ENCODE measurements at regions of chr1 and their contacts with region 1.

Region 1: GRCh38 chr1:8987881-8988617 is 38.2 kb downstream of the SLC2A7 start:
- DNase-seq: peak; percentile 19 to 78 (median 65)
- ATAC-seq: peak; percentile 89
- H3K4me3 ChIP-seq: no peak overlapping the region
- H3K4me3 Mint-ChIP-seq: peak overlapping the region; percentile 36 to 85 (median 73)
- H3K27ac ChIP-seq: peak overlapping the region; percentile 65
- H3K27ac Mint-ChIP-seq: peak overlapping the region; percentile 57 to 99 (median 93)
- H3K4me1 ChIP-seq: peaks cover 4 to 22% of the 10 kb centered on the region in 2 donors
- H3K4me1 Mint-ChIP-seq: peaks cover 9 to 63% (median 41%) of the 10 kb centered on the region in 7 donors
- H3K27me3 ChIP-seq: no peaks in the 10 kb centered on the region
- H3K27me3 Mint-ChIP-seq: no peaks in the 10 kb centered on the region

Region 2: DNA sequence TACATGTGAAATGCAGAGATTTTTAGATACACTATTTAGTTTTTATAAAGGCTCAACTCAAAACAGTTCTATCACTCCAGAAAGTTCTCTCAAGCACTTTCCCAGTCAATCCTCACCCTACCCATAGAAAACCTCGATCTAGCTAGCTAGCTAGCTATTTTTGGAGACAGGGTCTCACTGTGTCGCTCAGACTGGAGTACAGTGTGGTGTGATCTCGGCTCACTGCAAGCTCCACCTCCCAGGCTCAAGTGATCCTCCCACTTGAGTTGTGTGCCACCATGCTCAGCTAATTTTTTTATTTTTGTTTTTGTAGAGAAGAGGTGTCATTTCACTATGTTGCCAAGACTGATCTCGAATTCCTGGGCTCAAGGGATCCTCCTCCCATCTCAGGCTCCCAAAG is 407.5 kb before region 1 on chr1:
- CTCF ChIA-PET with region 1: no interaction called
- POLR2A ChIA-PET with region 1: no interaction called
- intact Hi-C with region 1: no loop called
- DNase-seq: no peak
- ATAC-seq: no peak
- H3K4me3 ChIP-seq: no peak overlapping the region
- H3K4me3 Mint-ChIP-seq: no peak overlapping the region
- H3K27ac ChIP-seq: no peak overlapping the region
- H3K27ac Mint-ChIP-seq: peak overlapping the region in 1 of 9 donors; percentile 25
- H3K4me1 ChIP-seq: no peaks in the 10 kb centered on the region
- H3K4me1 Mint-ChIP-seq: peaks cover 0 to 9% (median 0%) of the 10 kb centered on the region in 7 donors
- H3K27me3 ChIP-seq: no peaks in the 10 kb centered on the region
- H3K27me3 Mint-ChIP-seq: no peaks in the 10 kb centered on the region

Region 3: DNA sequence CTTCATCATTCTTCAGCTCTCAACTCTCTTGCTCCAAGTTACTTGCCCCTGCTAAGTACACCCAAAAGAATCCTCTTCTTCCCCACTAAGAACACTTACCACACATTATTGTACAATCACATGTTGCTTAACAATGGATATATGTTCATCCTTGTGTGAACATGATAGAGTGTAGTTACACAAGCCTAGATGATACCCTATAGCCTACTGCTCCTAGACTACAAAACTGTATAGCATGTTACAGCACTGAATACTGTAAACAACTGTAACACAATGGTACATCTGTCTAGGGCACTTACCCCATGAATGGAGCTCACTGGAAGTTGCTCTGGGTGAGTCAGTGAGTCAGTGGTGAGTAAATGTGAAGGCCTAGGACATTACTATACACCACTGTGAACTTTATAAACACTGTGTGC is 248.0 kb before region 1 on chr1:
- CTCF ChIA-PET with region 1: no interaction called
- POLR2A ChIA-PET with region 1: no interaction called
- intact Hi-C with region 1: no loop called
- DNase-seq: no peak
- ATAC-seq: no peak
- H3K4me3 ChIP-seq: no peak overlapping the region
- H3K4me3 Mint-ChIP-seq: no peak overlapping the region
- H3K27ac ChIP-seq: no peak overlapping the region
- H3K27ac Mint-ChIP-seq: no peak overlapping the region
- H3K4me1 ChIP-seq: no peaks in the 10 kb centered on the region
- H3K4me1 Mint-ChIP-seq: peaks cover 0 to 11% (median 0%) of the 10 kb centered on the region in 7 donors
- H3K27me3 ChIP-seq: no peaks in the 10 kb centered on the region
- H3K27me3 Mint-ChIP-seq: no peaks in the 10 kb centered on the region

Region 4: DNA sequence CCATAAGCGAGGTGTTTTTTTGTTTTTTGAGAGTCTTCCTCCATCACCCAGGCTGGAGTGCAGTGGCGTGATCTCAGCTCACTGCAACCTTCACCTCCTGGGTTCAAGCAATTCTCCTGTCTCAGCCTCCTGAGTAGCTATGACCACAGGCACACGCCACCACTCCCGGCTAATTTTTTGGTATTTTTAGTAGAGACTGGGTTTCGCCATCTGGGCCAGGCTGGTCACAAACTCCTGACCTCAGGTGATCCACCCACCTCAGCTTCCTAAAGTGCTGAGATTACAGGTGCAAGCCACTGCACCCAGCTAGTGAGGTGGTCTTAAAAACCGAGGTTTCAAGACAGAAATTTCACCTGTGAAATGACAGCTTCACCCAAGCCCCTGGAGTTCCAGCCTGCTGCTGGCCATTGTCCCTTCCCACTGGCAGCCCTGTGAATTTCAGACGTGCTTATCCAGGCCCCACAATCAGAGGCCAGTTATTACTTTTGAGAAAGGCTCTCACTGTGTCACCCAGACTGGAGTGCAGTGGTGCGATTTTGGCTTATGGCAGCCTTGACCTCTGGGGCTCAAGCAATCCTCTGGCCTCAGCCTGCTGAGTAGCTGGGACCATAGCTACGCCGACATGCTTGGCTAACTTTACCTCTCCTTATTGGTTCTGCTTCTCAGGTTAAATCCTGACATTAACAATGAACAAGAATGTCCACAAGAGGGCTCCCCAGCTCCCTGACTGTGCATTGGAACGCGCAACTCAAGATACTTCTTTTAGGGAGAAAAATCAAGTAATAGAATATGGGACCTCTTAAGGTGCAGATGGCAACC is 129.0 kb before region 1 on chr1:
- CTCF ChIA-PET with region 1: interaction called, 9 read pairs
- POLR2A ChIA-PET with region 1: interaction called, 6 read pairs
- intact Hi-C with region 1: loop called (anchors 1 to 5 kb)
- DNase-seq: peak in 7 of 9 donors; percentile 52 to 73 (median 61)
- ATAC-seq: peak; percentile 83
- H3K4me3 ChIP-seq: no peak overlapping the region
- H3K4me3 Mint-ChIP-seq: peak overlapping the region in 1 of 10 donors; percentile 61
- H3K27ac ChIP-seq: no peak overlapping the region
- H3K27ac Mint-ChIP-seq: peak overlapping the region; percentile 45 to 89 (median 78)
- H3K4me1 ChIP-seq: no peaks in the 10 kb centered on the region
- H3K4me1 Mint-ChIP-seq: peaks cover 0 to 48% (median 10%) of the 10 kb centered on the region in 7 donors
- H3K27me3 ChIP-seq: no peaks in the 10 kb centered on the region
- H3K27me3 Mint-ChIP-seq: no peaks in the 10 kb centered on the region

Region 5: GRCh38 chr1:8947127-8947691 is 40.8 kb before region 1 on chr1:
- CTCF ChIA-PET with region 1: interaction called, 4 read pairs
- POLR2A ChIA-PET with region 1: interaction called, 10 read pairs
- intact Hi-C with region 1: loop called in 1 of 2 experiments (anchors 5 kb)
- DNase-seq: peak in 2 of 9 donors; percentile 19 to 36
- ATAC-seq: no peak
- H3K4me3 ChIP-seq: no peak overlapping the region
- H3K4me3 Mint-ChIP-seq: peak overlapping the region; percentile 21 to 80 (median 61)
- H3K27ac ChIP-seq: peak overlapping the region; percentile 57
- H3K27ac Mint-ChIP-seq: peak overlapping the region; percentile 68 to 98 (median 90)
- H3K4me1 ChIP-seq: peaks cover 16 to 68% of the 10 kb centered on the region in 2 donors
- H3K4me1 Mint-ChIP-seq: peaks cover 42 to 82% (median 61%) of the 10 kb centered on the region in 7 donors
- H3K27me3 ChIP-seq: no peaks in the 10 kb centered on the region
- H3K27me3 Mint-ChIP-seq: no peaks in the 10 kb centered on the region

Region 6: DNA sequence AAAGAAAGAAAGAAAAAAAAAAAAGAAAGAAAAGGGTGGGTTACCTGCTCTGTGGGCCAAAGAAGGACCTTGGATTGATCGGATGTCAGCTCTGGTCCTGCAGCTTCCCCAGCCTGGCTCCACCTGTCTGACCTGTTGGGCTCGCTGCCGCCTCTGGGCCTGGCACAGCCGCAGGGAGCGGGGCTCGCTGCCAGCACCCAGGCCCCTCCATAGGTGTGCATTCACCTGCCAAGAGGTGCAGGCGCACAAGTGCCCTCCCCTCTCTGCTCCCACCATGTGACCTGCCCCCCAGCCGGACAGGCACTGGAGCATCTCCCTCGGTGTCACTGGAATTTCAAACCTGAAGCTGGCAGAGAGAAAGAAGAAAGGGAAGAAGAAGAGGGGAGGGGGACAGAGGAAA is 173.9 kb after region 1 on chr1:
- CTCF ChIA-PET with region 1: no interaction called
- POLR2A ChIA-PET with region 1: no interaction called
- intact Hi-C with region 1: no loop called
- DNase-seq: no peak
- ATAC-seq: no peak
- H3K4me3 ChIP-seq: no peak overlapping the region
- H3K4me3 Mint-ChIP-seq: no peak overlapping the region
- H3K27ac ChIP-seq: no peak overlapping the region
- H3K27ac Mint-ChIP-seq: no peak overlapping the region
- H3K4me1 ChIP-seq: no peaks in the 10 kb centered on the region
- H3K4me1 Mint-ChIP-seq: peaks cover 0 to 16% (median 0%) of the 10 kb centered on the region in 7 donors
- H3K27me3 ChIP-seq: no peaks in the 10 kb centered on the region
- H3K27me3 Mint-ChIP-seq: no peaks in the 10 kb centered on the region